ENCODE measurements at regions of chr3 and their contacts with region 1.

Region 1: GRCh38 chr3:122245513-122246174 is 62.2 kb downstream of the CASR start:
- DNase-seq: no peak
- ATAC-seq: peak; percentile 70
- H3K4me3 Mint-ChIP-seq: peak overlapping the region; percentile 59
- H3K27ac Mint-ChIP-seq: peak overlapping the region; percentile 50
- H3K4me1 Mint-ChIP-seq: peaks cover 21% of the 10 kb centered on the region
- H3K27me3 Mint-ChIP-seq: peaks cover 8% of the 10 kb centered on the region
- CTCF ChIP-seq: peak; percentile 80

Region 2: DNA sequence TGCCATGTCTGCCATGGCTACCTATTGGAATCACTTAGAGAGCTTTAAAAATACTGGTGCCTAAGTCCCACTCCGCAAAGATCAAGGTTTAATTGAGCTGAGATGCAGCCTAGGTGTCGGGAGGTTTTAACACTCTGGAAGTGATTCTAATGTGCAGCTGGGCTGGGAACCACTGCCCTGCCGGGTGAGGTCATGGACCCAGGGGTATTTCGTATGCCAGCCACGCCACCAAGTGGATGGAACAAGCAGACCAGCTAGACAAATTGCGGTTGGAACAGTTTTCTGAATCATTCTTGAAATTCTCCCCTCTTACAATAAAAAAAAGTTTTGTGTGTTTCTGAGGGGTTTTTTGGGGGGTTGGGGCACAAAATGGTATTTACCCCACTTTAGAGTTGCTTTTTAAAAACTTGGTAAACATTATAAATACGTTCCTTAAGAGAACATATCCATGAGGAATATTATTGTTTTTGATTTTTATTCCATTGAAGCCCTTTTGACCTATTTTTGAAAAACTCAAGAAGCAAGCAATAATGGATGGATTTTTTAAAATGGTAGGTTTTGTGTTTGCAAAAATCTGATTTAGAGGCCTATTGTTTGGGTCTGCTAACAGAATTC is 13.2 kb after region 1 on chr3:
- CTCF ChIA-PET with region 1: interaction called, 10 read pairs
- POLR2A ChIA-PET with region 1: no interaction called
- intact Hi-C with region 1: no loop called
- DNase-seq: peak; percentile 86
- ATAC-seq: peak; percentile 91
- H3K4me3 Mint-ChIP-seq: no peak overlapping the region
- H3K27ac Mint-ChIP-seq: peak overlapping the region; percentile 43
- H3K4me1 Mint-ChIP-seq: peaks cover 21% of the 10 kb centered on the region
- H3K27me3 Mint-ChIP-seq: peaks cover 3% of the 10 kb centered on the region
- CTCF ChIP-seq: peak; percentile 71

Region 3: GRCh38 chr3:122322095-122323075 is 76.7 kb after region 1 on chr3:
- CTCF ChIA-PET with region 1: no interaction called
- POLR2A ChIA-PET with region 1: no interaction called
- intact Hi-C with region 1: no loop called
- DNase-seq: peak; percentile 68
- ATAC-seq: peak; percentile 95
- H3K4me3 Mint-ChIP-seq: no peak overlapping the region
- H3K27ac Mint-ChIP-seq: no peak overlapping the region
- H3K4me1 Mint-ChIP-seq: peaks cover 18% of the 10 kb centered on the region
- H3K27me3 Mint-ChIP-seq: no peaks in the 10 kb centered on the region
- CTCF ChIP-seq: no peak

Measured in activated CD8-positive, alpha-beta T cell treated with anti-CD3 and anti-CD28 coated beads for 36 hours (primary cell).